Calu3 (cell line): ENCODE measurements at regions of chr14 and their contacts with region 1.

Region 1: GRCh38 chr14:76647697-76648298 is 113.5 kb upstream of the VASH1 start:
- DNase-seq: peak; percentile 36
- H3K4me3 Mint-ChIP-seq: no peak overlapping the region
- H3K27ac Mint-ChIP-seq: no peak overlapping the region
- H3K4me1 Mint-ChIP-seq: no peaks in the 10 kb centered on the region
- H3K27me3 Mint-ChIP-seq: peaks cover 79% of the 10 kb centered on the region
- CTCF ChIP-seq: peak; percentile 43

Region 2: DNA sequence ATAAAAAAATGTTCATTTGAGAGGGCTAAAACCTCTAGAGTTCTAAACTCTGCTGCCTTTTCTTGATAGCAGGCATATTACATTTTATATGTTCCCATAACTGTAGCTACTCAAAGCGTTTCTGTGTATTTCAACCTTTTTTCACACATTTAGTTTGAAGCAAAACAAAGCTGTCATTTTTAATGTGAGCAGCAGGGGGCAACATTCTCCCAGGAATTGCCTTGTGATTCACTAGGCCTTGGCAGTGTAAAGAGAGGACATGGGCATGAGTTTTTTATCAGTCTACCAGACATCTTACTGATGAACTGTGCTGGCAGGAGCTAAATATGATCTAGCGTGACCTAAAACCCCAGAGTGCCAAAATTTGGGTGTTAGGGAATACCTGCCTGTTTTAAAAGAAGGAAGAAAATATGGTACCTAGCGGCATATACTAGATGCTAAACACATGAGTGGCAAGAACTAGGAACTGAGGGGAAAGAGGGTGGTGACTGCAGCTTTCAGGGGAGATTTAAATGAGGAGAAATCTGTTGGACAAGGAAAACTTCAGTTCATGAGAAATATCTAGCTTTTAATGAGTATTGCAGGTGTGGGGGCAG is 596.9 kb before region 1 on chr14:
- CTCF ChIA-PET with region 1: interaction called, 4 read pairs
- intact Hi-C with region 1: loop called (anchors 2 kb)
- DNase-seq: peak; percentile 58
- H3K4me3 Mint-ChIP-seq: no peak overlapping the region
- H3K27ac Mint-ChIP-seq: no peak overlapping the region
- H3K4me1 Mint-ChIP-seq: no peaks in the 10 kb centered on the region
- H3K27me3 Mint-ChIP-seq: no peaks in the 10 kb centered on the region
- CTCF ChIP-seq: peak; percentile 59

Region 3: DNA sequence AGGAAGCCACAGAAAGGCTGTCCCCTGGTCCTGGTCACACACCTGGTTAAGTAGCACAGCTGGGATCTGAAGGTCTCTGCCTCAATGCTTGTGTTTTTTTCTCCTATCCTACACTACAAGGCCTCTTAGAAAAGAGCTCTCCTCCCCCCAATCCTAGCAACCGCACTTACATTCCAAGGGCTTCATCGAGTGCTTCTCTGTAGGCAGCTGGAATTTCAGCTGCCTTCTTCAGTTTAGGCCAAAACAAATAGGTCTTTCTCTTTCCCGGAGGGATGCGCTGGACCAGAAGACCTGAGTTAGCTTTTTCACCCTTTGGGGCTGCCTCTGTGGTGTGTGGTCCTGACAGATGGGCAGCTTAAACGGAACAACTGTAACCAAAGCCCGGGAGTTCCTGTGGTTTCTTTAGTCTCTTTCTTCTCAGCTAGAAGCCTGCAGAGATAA is 386.4 kb before region 1 on chr14:
- CTCF ChIA-PET with region 1: no interaction called
- intact Hi-C with region 1: no loop called
- DNase-seq: no peak
- H3K4me3 Mint-ChIP-seq: no peak overlapping the region
- H3K27ac Mint-ChIP-seq: no peak overlapping the region
- H3K4me1 Mint-ChIP-seq: no peaks in the 10 kb centered on the region
- H3K27me3 Mint-ChIP-seq: no peaks in the 10 kb centered on the region
- CTCF ChIP-seq: no peak

Region 4: DNA sequence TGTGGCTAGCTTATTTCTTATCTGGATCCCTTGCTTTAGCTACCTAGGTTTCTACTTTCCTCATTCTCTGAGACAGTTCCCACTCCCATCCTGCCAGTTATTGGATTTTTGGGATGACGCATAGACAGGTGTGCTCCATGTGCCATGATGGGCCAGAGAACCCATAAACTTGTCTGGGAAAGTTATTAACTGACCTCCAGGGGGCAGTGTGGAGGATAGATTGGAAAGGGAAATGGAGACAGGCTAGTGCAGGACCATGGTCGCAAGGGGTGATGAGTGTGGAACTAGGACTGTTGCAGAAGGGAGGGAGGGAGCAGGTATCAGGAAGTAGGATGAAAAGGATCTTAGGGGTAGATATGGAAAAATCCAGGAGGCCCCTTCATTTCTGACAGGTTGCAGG is 191.6 kb before region 1 on chr14:
- CTCF ChIA-PET with region 1: no interaction called
- intact Hi-C with region 1: loop called (anchors 5 kb)
- DNase-seq: peak; percentile 49
- H3K4me3 Mint-ChIP-seq: no peak overlapping the region
- H3K27ac Mint-ChIP-seq: no peak overlapping the region
- H3K4me1 Mint-ChIP-seq: no peaks in the 10 kb centered on the region
- H3K27me3 Mint-ChIP-seq: peaks cover 69% of the 10 kb centered on the region
- CTCF ChIP-seq: peak; percentile 18

Region 5: GRCh38 chr14:76514613-76515012 is 133.2 kb before region 1 on chr14:
- CTCF ChIA-PET with region 1: interaction called, 3 read pairs
- intact Hi-C with region 1: loop called (anchors 1 kb)
- DNase-seq: peak; percentile 26
- H3K4me3 Mint-ChIP-seq: no peak overlapping the region
- H3K27ac Mint-ChIP-seq: no peak overlapping the region
- H3K4me1 Mint-ChIP-seq: no peaks in the 10 kb centered on the region
- H3K27me3 Mint-ChIP-seq: peaks cover 91% of the 10 kb centered on the region
- CTCF ChIP-seq: no peak

Region 6: GRCh38 chr14:76761136-76761959 is 113.5 kb after region 1 on chr14 and contains the start of gene VASH1:
- CTCF ChIA-PET with region 1: no interaction called
- intact Hi-C with region 1: no loop called
- DNase-seq: peak; percentile 58
- H3K4me3 Mint-ChIP-seq: peak within 1 kb of the TSS; percentile 67
- H3K27ac Mint-ChIP-seq: no peak within 1 kb of the TSS
- H3K4me1 Mint-ChIP-seq: no peaks in the 10 kb centered on the region
- H3K27me3 Mint-ChIP-seq: peaks cover 87% of the 10 kb centered on the region
- CTCF ChIP-seq: no peak
- total RNA-seq, gene VASH1: 1.2 and 1.4 TPM in 2 replicates